ENCODE measurements at regions of chr17 and their contacts with region 1.

Region 1: DNA sequence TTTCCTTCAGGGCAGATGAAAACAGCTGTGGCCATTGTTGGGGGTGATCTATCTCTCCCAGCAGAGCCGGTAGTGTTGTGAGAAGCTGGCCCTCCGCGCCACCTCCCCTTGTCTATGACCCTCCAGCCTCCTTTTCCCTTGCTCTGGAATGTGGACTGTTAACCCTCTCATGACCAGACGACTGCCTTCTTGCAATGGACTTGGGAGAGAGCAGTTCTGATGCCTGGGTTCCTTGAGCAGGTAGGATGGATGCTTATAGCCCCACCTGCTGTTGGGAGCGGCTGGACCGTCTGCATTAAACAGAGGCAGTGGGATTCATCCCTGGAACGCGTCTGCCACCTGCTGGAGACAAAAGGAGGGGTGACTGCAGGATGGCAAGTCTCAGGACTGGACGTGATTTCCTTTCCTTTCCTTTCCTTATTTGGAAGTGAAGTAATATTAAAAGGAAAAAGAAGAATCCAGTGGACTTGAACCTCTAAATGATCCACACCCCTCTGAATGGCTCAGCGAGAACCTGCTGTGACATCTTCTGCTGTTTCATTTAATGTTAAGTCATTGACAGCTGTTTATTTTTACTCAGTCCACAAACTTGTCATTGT is 1.8 kb upstream of the SOST start:
- DNase-seq: peak; percentile 81
- H3K4me3 ChIP-seq: no peak overlapping the region
- H3K27ac ChIP-seq: no peak overlapping the region
- H3K4me1 ChIP-seq: no peaks in the 10 kb centered on the region
- H3K27me3 ChIP-seq: no peaks in the 10 kb centered on the region
- CTCF ChIP-seq: peak; percentile 91

Region 2: DNA sequence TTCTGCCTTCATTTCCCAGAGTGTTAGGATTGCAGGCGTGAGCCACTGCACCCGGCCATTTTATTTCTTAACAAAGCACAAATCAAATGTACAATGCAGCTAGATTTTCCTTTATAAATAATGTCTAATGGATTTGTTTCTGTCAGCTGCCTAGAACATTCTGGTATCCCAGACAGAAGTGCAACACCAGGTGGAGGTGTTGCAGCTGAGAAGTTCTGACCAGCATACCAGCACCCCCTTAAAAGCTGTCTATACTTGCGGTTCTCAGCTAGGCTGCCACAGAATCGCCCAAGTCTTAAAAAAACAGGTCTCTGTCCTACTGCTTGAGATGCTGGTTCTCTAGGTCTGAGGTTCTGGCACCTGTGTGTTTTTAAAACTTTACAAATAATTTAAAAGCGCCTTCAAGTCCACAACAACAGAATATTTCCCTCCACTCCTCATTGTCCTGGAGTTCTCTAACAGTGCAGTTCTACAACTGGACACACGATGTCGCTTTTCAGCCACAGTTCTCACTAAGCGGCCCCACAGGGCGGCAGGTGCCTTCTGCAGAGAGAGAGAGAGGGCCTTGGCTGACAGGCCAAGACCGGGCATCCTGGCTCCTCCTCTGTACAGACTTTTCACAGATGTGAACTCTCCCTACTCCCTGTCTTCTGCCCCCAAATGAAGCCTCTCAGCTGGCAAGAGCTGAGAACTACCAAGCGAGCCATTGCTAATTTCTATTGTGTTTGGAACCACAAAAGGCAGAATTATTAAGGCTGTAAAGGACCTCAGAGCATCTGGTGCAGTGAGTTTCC is 66.1 kb before region 1 on chr17:
- CTCF ChIA-PET with region 1: no interaction called
- POLR2A ChIA-PET with region 1: no interaction called
- intact Hi-C with region 1: loop called (anchors 1 kb)
- DNase-seq: peak; percentile 72
- H3K4me3 ChIP-seq: no peak overlapping the region
- H3K27ac ChIP-seq: no peak overlapping the region
- H3K4me1 ChIP-seq: no peaks in the 10 kb centered on the region
- H3K27me3 ChIP-seq: no peaks in the 10 kb centered on the region
- CTCF ChIP-seq: peak; percentile 72

Region 3: GRCh38 chr17:43713494-43714162 is 46.7 kb before region 1 on chr17:
- CTCF ChIA-PET with region 1: no interaction called
- POLR2A ChIA-PET with region 1: no interaction called
- intact Hi-C with region 1: no loop called
- DNase-seq: no peak
- H3K4me3 ChIP-seq: peak overlapping the region; percentile 40
- H3K27ac ChIP-seq: no peak overlapping the region
- H3K4me1 ChIP-seq: no peaks in the 10 kb centered on the region
- H3K27me3 ChIP-seq: peaks cover 3% of the 10 kb centered on the region
- CTCF ChIP-seq: no peak